HEK293 (cell line): ENCODE measurements at regions of chr12 and their contacts with region 1.

Region 1: DNA sequence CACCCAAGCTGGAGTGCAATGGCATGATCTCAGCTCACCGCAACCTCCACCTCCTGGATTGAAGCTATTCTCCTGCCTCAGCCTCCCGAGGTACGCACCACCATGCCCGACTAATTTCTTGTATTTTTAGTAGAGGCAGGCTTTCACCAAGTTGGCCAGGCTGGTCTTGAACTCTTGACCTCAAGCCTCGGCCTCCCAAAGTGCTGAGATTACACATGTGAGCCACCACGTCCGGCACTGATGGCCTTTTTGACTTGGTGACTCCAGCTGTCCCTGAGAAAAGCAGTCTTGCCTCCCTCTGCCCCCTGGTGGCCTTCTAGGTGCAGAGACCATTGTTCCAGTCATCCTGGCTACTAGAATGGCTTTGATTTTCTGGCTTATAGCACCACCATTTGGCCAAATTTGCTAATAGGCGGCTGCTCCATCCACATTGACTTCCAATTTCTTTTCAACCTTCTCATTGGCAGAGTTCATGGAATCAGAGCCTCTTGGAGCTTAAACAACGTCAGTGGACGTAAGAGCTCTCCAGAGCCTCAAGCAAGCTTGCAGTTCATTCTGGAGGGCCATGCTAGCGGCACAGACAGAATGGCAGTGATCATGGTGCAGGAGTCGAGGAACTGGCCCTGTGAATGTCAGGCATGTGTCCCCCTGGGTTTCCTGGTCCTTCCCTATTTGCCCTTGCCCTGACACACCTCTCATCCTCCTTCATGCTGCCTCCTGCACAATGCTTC is 25.4 kb upstream of the EIF4B start:
- H3K4me3 ChIP-seq: no peak overlapping the region
- H3K27ac ChIP-seq: no peak overlapping the region
- H3K4me1 ChIP-seq: no peaks in the 10 kb centered on the region
- CTCF ChIP-seq: peak; percentile 99

Region 2: DNA sequence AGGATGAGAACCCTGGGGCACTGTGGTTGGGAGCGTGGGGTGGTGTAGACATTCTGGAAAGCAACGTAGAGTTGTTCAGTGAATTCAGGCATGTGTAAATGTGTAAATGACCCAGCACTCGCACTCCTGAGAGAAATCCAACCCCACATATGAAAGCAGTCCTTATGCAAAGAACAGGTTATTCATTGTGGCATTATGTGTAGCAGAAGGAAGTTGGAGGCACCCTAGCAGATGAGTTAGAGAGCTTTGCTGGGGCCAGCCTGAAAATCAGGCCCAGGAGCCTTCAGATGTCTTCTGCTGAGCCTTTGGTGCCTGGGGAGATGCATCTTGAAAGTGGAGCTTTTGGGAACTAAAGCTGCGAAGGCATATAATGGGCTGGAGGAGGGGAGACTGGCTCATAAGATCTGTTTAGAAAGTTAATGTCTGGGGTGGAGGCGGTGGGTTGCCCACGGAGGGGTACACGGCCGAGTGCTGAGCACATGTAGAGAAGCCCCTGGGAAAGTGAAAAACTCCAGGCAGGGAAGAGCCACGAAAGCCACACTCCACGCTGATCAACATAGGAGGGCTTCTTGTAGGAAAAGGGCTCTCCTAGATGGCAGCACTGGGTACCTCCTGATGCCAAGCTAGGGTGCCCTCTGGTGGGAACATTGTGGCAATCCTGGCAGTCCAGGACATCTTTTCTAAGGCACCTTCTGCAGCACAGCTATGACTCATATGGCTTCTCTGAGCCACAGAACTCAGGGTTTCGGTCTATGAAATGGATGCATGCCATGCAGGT is 653.6 kb before region 1 on chr12:
- CTCF ChIA-PET with region 1: interaction called, 10 read pairs
- POLR2A ChIA-PET with region 1: no interaction called
- H3K4me3 ChIP-seq: no peak overlapping the region
- H3K27ac ChIP-seq: no peak overlapping the region
- H3K4me1 ChIP-seq: no peaks in the 10 kb centered on the region
- CTCF ChIP-seq: peak; percentile 97

Region 3: DNA sequence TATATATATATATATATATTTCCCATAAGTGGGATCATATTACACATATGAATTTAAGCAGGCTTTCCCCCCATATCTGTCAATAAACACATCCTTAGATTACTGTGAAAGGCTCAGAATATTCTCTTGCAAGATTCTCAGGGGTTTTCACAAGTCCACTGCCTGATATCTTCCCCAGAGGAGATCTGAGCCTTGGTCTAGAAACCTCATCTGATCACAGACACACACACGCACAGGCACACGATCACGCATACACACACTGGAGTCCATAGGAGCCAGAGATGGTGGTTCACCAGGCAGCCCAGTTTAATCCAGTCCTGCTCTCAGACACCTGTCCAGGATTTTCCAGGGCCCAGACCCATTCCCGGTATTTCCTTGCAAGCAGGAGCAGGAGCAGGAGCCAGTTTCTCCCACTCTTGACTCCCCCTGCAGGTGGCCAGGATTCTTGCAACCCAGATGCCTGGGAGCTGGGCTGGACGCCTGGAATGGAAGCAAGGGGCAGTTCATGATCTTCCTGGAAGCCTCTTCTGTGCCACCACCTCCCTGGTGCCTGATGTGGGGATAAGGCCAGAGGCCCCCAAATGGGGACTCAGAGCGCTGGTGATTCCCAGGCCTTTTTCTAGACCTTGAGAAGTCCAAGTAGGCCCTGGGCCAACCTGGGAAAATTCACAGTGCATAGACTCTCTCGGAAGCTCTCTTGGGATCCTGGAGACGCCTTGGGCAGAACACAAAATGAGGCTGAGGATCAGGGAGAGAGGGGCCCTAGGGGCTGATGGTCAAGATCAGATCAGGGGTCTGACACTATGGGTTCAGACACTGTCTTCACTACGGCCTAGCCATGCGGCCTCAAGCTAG is 115.5 kb before region 1 on chr12:
- CTCF ChIA-PET with region 1: interaction called, 13 read pairs
- POLR2A ChIA-PET with region 1: no interaction called
- H3K4me3 ChIP-seq: no peak overlapping the region
- H3K27ac ChIP-seq: no peak overlapping the region
- H3K4me1 ChIP-seq: no peaks in the 10 kb centered on the region; the same call in 1 of the 2 replicates
- CTCF ChIP-seq: peak; percentile 68; the same call in 1 of the 2 replicates

Region 4: GRCh38 chr12:52884526-52885293 is 96.1 kb before region 1 on chr12:
- CTCF ChIA-PET with region 1: interaction called, 835 read pairs
- POLR2A ChIA-PET with region 1: interaction called, 28 read pairs
- H3K4me3 ChIP-seq: no peak overlapping the region
- H3K27ac ChIP-seq: no peak overlapping the region
- H3K4me1 ChIP-seq: no peaks in the 10 kb centered on the region
- CTCF ChIP-seq: peak; percentile 75

Region 5: DNA sequence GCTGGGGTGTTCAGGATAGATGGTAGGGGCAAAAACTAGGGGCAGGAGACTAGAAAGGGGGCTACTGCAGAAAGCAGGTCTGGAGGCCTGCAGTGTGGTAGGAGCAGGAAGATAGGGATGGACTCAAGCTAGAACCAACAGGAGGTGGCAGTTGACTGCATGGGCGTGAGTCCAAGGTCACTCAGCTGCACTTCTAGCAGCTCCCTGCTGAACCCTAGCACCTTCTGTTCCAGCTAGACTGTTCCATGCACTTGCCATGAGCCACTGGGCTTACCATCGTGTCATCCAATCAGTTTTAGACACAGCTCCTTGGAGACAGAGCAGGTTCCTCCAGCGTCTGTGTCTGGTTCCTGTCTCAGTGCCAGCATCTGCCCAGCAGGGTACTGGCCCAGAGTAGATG is 64.6 kb before region 1 on chr12:
- CTCF ChIA-PET with region 1: interaction called, 14 read pairs
- POLR2A ChIA-PET with region 1: no interaction called
- H3K4me3 ChIP-seq: no peak overlapping the region
- H3K27ac ChIP-seq: no peak overlapping the region
- H3K4me1 ChIP-seq: no peaks in the 10 kb centered on the region
- CTCF ChIP-seq: no peak

Region 6: DNA sequence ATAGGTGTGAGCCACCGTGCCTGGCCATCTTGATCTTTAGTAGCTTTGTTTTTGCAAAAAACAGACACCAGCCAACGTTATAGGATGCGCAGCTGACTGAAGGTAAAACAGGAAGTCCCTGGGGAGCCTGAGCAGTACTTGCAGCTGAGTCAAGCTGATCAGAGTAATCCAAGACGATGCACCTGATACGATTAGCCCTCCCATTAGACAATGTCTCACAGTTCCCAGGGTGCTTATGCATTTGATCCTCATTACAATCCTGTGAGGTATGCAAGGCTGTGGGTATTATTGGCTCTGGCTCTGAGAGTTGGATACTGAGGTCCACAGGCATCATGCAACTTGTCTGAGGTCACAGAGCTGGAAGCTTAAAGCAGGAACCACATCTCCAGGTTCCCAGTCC is 23.9 kb before region 1 on chr12:
- CTCF ChIA-PET with region 1: interaction called, 19 read pairs
- POLR2A ChIA-PET with region 1: interaction called, 4 read pairs
- H3K4me3 ChIP-seq: no peak overlapping the region
- H3K27ac ChIP-seq: no peak overlapping the region
- H3K4me1 ChIP-seq: no peaks in the 10 kb centered on the region
- CTCF ChIP-seq: no peak